ENCODE measurements at regions of chr12 and their contacts with region 1.

Region 1: DNA sequence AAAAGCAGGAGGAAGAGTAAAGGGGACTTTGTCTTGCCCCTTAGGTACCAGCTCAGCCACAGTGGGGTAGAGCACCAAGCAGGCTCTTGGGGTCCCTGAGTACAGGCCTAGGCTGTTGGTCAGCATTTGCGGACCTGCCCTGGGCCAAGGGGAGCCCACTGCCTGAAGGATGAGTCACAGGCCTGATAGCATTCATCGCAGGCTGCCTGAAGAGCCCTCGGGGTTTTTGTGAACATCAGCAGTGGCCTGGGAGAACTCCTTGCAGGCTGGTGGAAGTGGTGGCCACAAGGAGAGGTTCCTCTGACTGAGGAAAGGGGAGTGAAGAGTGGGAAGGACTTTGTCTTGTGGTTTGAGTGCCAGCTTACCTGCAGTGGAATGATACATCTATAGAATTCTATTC is 25.0 kb upstream of the P2RX7 start:
- DNase-seq: no peak
- ATAC-seq: no peak
- H3K4me3 ChIP-seq: no peak overlapping the region
- H3K27ac ChIP-seq: no peak overlapping the region
- H3K4me1 ChIP-seq: no peaks in the 10 kb centered on the region
- H3K27me3 ChIP-seq: no peaks in the 10 kb centered on the region
- CTCF ChIP-seq: no peak
- POLR2A ChIP-seq: no peak

Region 2: GRCh38 chr12:121060149-121061001 is 47.3 kb before region 1 on chr12:
- intact Hi-C with region 1: loop called in 1 of 2 experiments (anchors 5 kb)
- DNase-seq: peak; percentile 51 to 60 (median 53)
- ATAC-seq: peak; percentile 90
- H3K4me3 ChIP-seq: peak overlapping the region; percentile 15 to 50 (median 49)
- H3K27ac ChIP-seq: peak overlapping the region; percentile 73 to 97 (median 77)
- H3K4me1 ChIP-seq: peaks cover 0 to 7% (median 2%) of the 10 kb centered on the region in 4 donors
- H3K27me3 ChIP-seq: no peaks in the 10 kb centered on the region
- CTCF ChIP-seq: peak; percentile 46 to 59 (median 52)
- POLR2A ChIP-seq: no peak

Region 3: DNA sequence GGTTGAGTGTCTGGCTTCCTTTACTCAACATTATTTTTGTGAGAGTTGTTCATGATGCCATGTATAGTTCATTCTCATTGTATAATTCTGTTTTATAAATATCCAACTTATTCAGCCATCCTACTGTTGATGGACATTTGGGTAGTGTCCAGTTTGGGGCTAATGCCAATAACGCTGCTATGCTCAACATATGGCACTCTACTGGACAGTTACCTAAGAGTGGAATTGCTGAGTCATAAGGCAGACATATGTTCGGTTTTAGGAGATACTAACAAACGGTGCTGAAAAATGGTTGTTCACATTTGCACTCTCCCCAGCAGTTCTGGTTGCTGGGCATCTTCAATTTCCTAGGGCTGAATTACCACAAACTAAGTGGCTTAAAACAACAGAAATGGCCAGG is 73.5 kb after region 1 on chr12:
- intact Hi-C with region 1: no loop called
- DNase-seq: no peak
- ATAC-seq: no peak
- H3K4me3 ChIP-seq: no peak overlapping the region
- H3K27ac ChIP-seq: no peak overlapping the region
- H3K4me1 ChIP-seq: no peaks in the 10 kb centered on the region
- H3K27me3 ChIP-seq: no peaks in the 10 kb centered on the region
- CTCF ChIP-seq: no peak
- POLR2A ChIP-seq: no peak